Psoas muscle (tissue), 8 donors: ENCODE measurements at regions of chr1 and their contacts with region 1.

Region 1: DNA sequence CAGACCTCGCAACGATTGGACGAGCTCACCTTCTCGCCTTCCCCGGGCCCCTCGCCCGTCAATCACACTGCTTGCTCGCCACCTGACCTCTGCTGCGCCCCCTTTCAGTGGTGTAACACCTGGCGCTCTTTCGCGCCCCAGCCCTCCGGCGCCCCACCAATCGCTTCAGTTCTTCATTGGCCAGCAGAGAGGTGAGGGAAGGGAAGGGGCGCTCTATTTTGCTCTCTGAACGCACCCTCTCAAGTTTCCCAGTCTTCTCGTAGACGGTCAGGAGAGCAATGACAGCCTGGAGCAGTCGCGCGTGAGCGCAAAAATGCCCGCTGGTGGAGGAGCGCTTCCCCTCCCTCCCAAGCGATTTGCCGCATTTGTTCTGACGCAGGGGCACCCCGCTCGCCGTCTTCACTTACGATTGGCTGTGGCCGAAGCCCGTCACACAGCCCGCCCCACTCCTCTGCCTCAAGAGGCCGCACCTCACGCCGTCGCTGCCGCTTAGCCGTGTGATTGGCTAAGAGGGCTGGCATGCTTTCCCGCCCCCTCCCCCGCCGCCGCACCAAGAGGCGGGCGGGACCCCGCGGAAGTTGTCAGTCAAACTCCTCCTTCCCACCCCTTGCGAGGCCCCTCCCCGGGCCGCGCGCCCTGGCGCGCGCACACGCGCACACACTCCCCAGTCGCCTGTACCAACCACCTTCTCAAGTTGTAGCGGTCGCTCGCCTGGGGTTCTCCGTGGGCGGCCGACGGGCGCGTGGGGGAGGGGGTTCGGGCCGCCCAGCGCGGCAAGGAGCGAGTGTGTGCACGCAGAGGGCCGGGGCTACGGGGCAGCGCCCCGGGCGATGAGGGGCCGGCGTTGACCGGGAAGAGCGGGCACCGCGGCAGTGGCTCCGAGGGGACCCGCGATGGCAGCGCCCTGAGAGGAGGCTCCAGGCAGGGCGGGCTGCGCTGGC is at the start of gene PPP2R5A:
- DNase-seq: peak; percentile 99 to 100
- ATAC-seq: peak; percentile 91 to 96 (median 92)
- H3K4me3 ChIP-seq: peak within 1 kb of the TSS; percentile 96
- H3K27ac ChIP-seq: peak within 1 kb of the TSS; percentile 100
- H3K4me1 ChIP-seq: peaks cover 23% of the 10 kb centered on the region
- H3K27me3 ChIP-seq: no peaks in the 10 kb centered on the region
- CTCF ChIP-seq: peak; percentile 19
- total RNA-seq, gene PPP2R5A: 28.5 to 55.1 (median 32.0) TPM

Region 2: GRCh38 chr1:212124690-212125582 is 160.1 kb before region 1 on chr1:
- intact Hi-C with region 1: loop called (anchors 2 to 5 kb)
- DNase-seq: no peak
- ATAC-seq: no peak
- H3K4me3 ChIP-seq: no peak overlapping the region
- H3K27ac ChIP-seq: no peak overlapping the region
- H3K4me1 ChIP-seq: peaks cover 11% of the 10 kb centered on the region
- H3K27me3 ChIP-seq: no peaks in the 10 kb centered on the region
- CTCF ChIP-seq: no peak

Region 3: DNA sequence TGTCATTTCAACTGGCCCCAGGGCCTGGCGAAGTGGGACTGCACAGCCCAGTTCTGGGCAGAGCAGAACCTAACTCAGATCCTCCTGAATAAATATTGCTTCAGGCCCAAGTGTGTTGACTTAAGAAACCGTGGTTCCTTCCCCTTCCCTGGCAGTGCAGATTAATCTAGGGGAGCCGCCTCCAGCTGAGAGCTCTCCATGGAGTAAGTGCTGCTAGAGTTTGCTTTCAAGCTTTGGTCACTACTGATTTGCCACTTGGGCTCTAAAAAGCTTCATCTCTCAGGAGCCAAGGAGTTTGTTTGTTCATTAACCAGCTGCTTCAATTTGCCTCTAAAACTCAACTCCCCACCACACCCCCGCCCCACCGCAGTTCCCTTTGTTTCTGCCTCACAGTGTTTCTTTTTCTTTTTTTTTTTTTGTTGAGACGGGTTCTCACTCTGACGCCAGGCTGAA is 137.4 kb before region 1 on chr1:
- intact Hi-C with region 1: no loop called
- DNase-seq: no peak
- ATAC-seq: no peak
- H3K4me3 ChIP-seq: no peak overlapping the region
- H3K27ac ChIP-seq: no peak overlapping the region
- H3K4me1 ChIP-seq: no peaks in the 10 kb centered on the region
- H3K27me3 ChIP-seq: no peaks in the 10 kb centered on the region
- CTCF ChIP-seq: no peak

Region 4: GRCh38 chr1:212161231-212161781 is 123.7 kb before region 1 on chr1:
- intact Hi-C with region 1: loop called in 1 of 2 experiments (anchors 2 kb)
- DNase-seq: no peak
- ATAC-seq: peak; percentile 85 to 94 (median 86)
- H3K4me3 ChIP-seq: no peak overlapping the region
- H3K27ac ChIP-seq: peak overlapping the region; percentile 80
- H3K4me1 ChIP-seq: peaks cover 28% of the 10 kb centered on the region
- H3K27me3 ChIP-seq: no peaks in the 10 kb centered on the region
- CTCF ChIP-seq: no peak

Region 5: GRCh38 chr1:212218911-212219310 is 66.1 kb before region 1 on chr1:
- intact Hi-C with region 1: no loop called
- DNase-seq: no peak
- ATAC-seq: no peak
- H3K4me3 ChIP-seq: no peak overlapping the region
- H3K27ac ChIP-seq: no peak overlapping the region
- H3K4me1 ChIP-seq: peaks cover 7% of the 10 kb centered on the region
- H3K27me3 ChIP-seq: no peaks in the 10 kb centered on the region
- CTCF ChIP-seq: no peak

Region 6: DNA sequence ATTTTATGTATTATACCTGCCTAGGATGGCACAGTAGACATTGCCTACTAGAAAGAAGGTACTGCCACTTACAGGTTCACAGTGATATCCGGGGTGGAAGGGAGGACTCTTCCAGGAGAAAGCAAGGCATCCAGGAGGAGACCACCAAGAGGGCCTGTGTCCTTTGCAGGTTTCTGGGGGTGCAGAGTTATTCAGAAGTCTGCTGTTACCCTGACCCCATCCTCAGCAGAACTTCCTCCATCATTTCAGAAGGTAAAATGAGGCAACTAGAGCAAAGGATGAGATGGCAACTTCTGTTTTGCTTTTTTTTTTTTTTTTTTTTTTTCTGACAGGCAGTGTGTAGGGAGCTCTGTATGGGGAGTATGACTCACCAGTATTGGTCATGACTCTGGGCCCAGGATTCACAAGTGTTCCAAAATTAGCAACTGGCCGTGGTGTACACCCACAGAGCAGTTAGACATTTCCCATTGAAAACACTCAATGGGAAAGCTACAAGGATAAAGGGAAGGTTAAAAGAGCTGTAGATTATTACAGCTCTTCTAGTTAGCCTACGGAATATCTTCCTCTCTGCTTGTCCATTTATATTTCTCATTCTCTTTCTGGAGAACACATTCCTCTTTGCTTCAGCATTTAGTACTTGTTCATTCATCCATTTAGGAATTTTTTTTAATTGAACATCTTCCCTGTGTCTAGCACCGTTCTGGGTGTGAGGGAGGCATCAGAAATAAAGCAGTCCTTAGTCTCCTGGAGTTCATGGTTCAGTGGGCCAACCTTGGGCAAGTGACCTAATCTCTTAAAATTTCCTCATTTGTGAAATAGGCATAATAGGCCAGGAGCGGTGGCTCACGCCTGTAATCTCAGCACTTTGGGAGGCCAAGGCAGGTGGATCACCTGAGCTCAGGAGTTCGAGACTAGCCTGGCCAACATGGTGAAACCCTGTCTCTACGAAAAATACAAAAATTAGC is 50.3 kb before region 1 on chr1:
- intact Hi-C with region 1: loop called (anchors 2 to 5 kb)
- DNase-seq: peak; percentile 26 to 61
- ATAC-seq: peak; percentile 95 to 98 (median 96)
- H3K4me3 ChIP-seq: no peak overlapping the region
- H3K27ac ChIP-seq: peak overlapping the region; percentile 90
- H3K4me1 ChIP-seq: peaks cover 60% of the 10 kb centered on the region
- H3K27me3 ChIP-seq: no peaks in the 10 kb centered on the region
- CTCF ChIP-seq: no peak

Region 7: GRCh38 chr1:212718499-212718898 is 433.5 kb after region 1 on chr1:
- intact Hi-C with region 1: loop called in 1 of 2 experiments (anchors 5 kb)
- DNase-seq: no peak
- ATAC-seq: no peak
- H3K4me3 ChIP-seq: no peak overlapping the region
- H3K27ac ChIP-seq: no peak overlapping the region
- H3K4me1 ChIP-seq: no peaks in the 10 kb centered on the region
- H3K27me3 ChIP-seq: no peaks in the 10 kb centered on the region
- CTCF ChIP-seq: no peak